Mammary epithelial cell (primary cell): ENCODE measurements at regions of chr6 and their contacts with region 1.

Region 1: GRCh38 chr6:7673063-7673536 is 52.8 kb upstream of the BMP6 start:
- DNase-seq: peak; percentile 81
- H3K4me3 ChIP-seq: no peak overlapping the region
- H3K27ac ChIP-seq: peak overlapping the region; percentile 41
- H3K4me1 ChIP-seq: peaks cover 35% of the 10 kb centered on the region
- H3K27me3 ChIP-seq: no peaks in the 10 kb centered on the region
- CTCF ChIP-seq: peak in 1 of 2 donors; percentile 44

Region 2: GRCh38 chr6:7640607-7641577 is 32.2 kb before region 1 on chr6:
- CTCF ChIA-PET with region 1: no interaction called
- dilution Hi-C with region 1: no loop called
- in situ Hi-C with region 1: no loop called
- intact Hi-C with region 1: loop called (anchors 1 kb)
- DNase-seq: peak; percentile 94
- H3K4me3 ChIP-seq: no peak overlapping the region
- H3K27ac ChIP-seq: peak overlapping the region; percentile 52
- H3K4me1 ChIP-seq: peaks cover 37% of the 10 kb centered on the region
- H3K27me3 ChIP-seq: no peaks in the 10 kb centered on the region
- CTCF ChIP-seq: peak; percentile 20 to 23